ENCODE measurements at regions of chr20 and their contacts with region 1.

Region 1: DNA sequence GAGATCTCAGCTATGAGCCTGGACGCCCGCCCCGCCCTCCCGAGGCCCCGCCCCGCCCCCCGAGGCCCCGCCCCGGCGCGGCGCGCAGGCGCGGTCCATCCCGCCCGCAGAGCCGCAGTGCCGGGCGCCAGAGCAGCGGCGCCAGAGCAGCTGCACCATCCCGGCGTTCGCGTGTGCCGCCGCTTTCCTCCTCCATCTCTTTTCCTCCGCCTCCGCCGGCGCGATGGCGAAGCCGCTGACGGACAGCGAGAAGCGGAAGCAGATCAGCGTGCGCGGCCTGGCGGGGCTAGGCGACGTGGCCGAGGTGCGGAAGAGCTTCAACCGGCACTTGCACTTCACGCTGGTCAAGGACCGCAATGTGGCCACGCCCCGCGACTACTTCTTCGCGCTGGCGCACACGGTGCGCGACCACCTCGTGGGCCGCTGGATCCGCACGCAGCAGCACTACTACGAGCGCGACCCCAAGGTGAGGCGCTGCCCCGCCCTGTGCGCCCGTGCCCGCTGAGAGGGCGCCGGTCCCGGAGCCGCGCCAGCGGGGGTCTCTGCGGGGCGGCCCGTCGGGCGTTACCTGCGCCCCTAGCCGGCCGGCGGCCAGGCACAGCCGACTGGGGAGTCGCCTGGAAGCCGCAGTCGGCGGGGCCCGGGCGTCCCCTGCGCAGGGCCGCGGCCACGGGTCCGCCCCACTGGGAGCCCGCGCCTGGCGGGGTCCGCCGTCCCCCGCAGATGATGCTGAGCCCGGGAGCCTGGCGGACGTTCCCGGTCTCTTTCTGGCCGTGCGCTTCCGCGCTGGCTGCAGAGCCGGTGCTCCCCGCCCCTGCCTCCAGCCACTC is at the start of gene PYGB:
- DNase-seq: peak; percentile 95
- CTCF ChIP-seq: peak; percentile 2

Region 2: DNA sequence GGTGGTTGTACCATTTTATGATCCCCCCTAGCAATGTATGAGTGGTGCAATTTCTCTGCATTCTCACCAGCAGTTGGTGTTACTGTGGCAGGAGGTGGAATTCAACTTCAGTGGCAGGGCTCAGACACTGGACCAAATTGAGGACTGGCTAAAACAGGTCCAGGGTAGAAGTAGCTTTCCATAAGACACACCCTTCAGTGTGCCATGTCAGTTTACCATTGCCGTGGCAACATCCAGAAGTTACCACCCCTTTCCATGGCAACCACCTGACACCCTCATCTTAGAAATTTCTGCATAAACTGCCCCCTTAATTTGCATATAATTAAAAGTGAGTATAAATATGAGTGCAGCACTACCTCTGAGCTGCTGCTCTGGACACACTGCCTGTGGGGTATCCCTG is 1078.9 kb before region 1 on chr20:
- CTCF ChIA-PET with region 1: no interaction called
- POLR2A ChIA-PET with region 1: no interaction called
- DNase-seq: no peak
- CTCF ChIP-seq: no peak

Region 3: GRCh38 chr20:25259788-25260254 is 11.7 kb after region 1 on chr20:
- CTCF ChIA-PET with region 1: interaction called, 11 read pairs
- POLR2A ChIA-PET with region 1: no interaction called
- DNase-seq: no peak
- CTCF ChIP-seq: no peak

Region 4: DNA sequence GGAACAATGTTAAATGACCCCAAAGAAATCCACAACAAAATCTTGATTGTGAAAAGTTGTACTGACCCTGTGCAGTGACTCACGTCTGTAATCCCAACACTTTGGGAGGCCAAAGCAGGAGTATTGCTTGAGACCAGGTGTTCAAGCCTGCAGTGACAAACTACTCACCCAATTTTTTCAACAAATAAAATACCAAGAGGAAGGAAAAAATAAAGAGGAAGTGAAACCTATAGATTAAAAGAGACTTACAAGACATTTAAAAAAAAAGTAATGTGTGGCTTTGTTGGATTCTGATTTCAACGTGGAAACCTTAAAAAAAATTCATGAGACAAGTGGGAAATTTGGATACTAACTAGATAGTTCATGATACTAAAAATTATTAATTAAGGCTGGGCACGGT is 191.2 kb after region 1 on chr20:
- CTCF ChIA-PET with region 1: no interaction called
- POLR2A ChIA-PET with region 1: no interaction called
- DNase-seq: no peak
- CTCF ChIP-seq: no peak

Measured in GM10248 (cell line).